K562 (cell line): ENCODE measurements at regions of chr12 and their contacts with region 1.

Region 1: DNA sequence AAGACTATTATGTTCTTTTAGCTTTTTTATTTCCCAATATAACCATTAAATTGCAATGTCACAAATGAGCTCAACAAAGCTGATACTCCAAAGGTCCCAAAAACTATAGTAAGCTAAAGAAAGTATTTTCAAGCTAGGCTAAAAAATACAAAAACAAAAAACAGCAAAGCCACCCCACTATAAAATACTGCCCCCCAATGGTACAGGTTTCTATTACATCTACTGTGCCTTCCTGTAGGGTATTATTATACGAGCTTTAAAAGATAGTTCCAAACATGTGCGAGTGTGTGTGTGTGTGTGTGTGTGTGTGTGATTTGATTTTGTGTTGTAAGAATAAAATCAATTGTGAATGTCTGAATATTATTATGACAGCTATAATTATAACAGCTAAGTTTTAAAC is 1.1 kb downstream of the IFNG start:
- DNase-seq: peak; percentile 28 to 46 (median 42)
- ATAC-seq: peak; percentile 83
- H3K4me3 ChIP-seq: no peak overlapping the region
- H3K27ac ChIP-seq: no peak overlapping the region
- H3K4me1 ChIP-seq: no peaks in the 10 kb centered on the region
- H3K27me3 ChIP-seq: peaks cover 4 to 7% of the 10 kb centered on the region in 2 experiments; a peak in 2 of 5 replicates
- CTCF ChIP-seq: peak; percentile 40 to 70 (median 52); a peak in 5 of 6 replicates
- EP300 ChIP-seq: no peak
- POLR2A ChIP-seq: no peak
- RAD21 ChIP-seq: peak; percentile 43 to 70; a peak in 3 of 4 replicates

Region 2: GRCh38 chr12:68001486-68002466 is 156.7 kb before region 1 on chr12:
- CTCF ChIA-PET with region 1: interaction called, 6 read pairs
- POLR2A ChIA-PET with region 1: no interaction called
- in situ Hi-C with region 1: no loop called
- intact Hi-C with region 1: loop called (anchors 5 kb)
- DNase-seq: peak in 3 of 4 experiments; percentile 10 to 29 (median 11)
- ATAC-seq: peak; percentile 57
- H3K4me3 ChIP-seq: no peak overlapping the region
- H3K27ac ChIP-seq: no peak overlapping the region
- H3K4me1 ChIP-seq: no peaks in the 10 kb centered on the region
- H3K27me3 ChIP-seq: no peaks in the 10 kb centered on the region
- CTCF ChIP-seq: peak; percentile 31 to 58 (median 42); a peak in 5 of 6 replicates
- EP300 ChIP-seq: no peak
- POLR2A ChIP-seq: no peak
- RAD21 ChIP-seq: peak; percentile 50 to 71

Region 3: GRCh38 chr12:68040450-68041075 is 117.9 kb before region 1 on chr12:
- CTCF ChIA-PET with region 1: no interaction called
- POLR2A ChIA-PET with region 1: no interaction called
- in situ Hi-C with region 1: no loop called
- intact Hi-C with region 1: loop called (anchors 5 kb)
- DNase-seq: peak; percentile 66 to 79 (median 69)
- ATAC-seq: peak; percentile 86
- H3K4me3 ChIP-seq: no peak overlapping the region
- H3K27ac ChIP-seq: no peak overlapping the region
- H3K4me1 ChIP-seq: peaks cover 4 to 14% of the 10 kb centered on the region in 2 experiments; a peak in 4 of 5 replicates
- H3K27me3 ChIP-seq: no peaks in the 10 kb centered on the region; a peak in 1 of 5 replicates
- CTCF ChIP-seq: peak; percentile 63 to 88 (median 80)
- EP300 ChIP-seq: no peak
- POLR2A ChIP-seq: no peak
- RAD21 ChIP-seq: peak; percentile 67 to 80